ENCODE measurements at regions of chr6 and their contacts with region 1.

Region 1: GRCh38 chr6:2848851-2849250 is 7.2 kb upstream of the SERPINB1 start:
- DNase-seq: no peak
- ATAC-seq: peak; percentile 65
- H3K4me3 Mint-ChIP-seq: peak overlapping the region; percentile 33
- H3K27ac Mint-ChIP-seq: peak overlapping the region; percentile 83
- H3K4me1 Mint-ChIP-seq: peaks cover 59% of the 10 kb centered on the region
- H3K27me3 Mint-ChIP-seq: no peaks in the 10 kb centered on the region
- CTCF ChIP-seq: no peak

Region 2: GRCh38 chr6:2237001-2237400 is 611.9 kb before region 1 on chr6:
- CTCF ChIA-PET with region 1: no interaction called
- POLR2A ChIA-PET with region 1: no interaction called
- intact Hi-C with region 1: no loop called
- DNase-seq: no peak
- ATAC-seq: no peak
- H3K4me3 Mint-ChIP-seq: no peak overlapping the region
- H3K27ac Mint-ChIP-seq: no peak overlapping the region
- H3K4me1 Mint-ChIP-seq: peaks cover 15% of the 10 kb centered on the region
- H3K27me3 Mint-ChIP-seq: no peaks in the 10 kb centered on the region
- CTCF ChIP-seq: no peak

Region 3: GRCh38 chr6:2862712-2863181 is 13.9 kb after region 1 on chr6:
- CTCF ChIA-PET with region 1: interaction called, 37 read pairs
- POLR2A ChIA-PET with region 1: interaction called, 126 read pairs
- intact Hi-C with region 1: loop called (anchors 1 kb)
- DNase-seq: no peak
- ATAC-seq: peak; percentile 56
- H3K4me3 Mint-ChIP-seq: peak overlapping the region; percentile 56
- H3K27ac Mint-ChIP-seq: peak overlapping the region; percentile 92
- H3K4me1 Mint-ChIP-seq: peaks cover 91% of the 10 kb centered on the region
- H3K27me3 Mint-ChIP-seq: no peaks in the 10 kb centered on the region
- CTCF ChIP-seq: no peak

Region 4: DNA sequence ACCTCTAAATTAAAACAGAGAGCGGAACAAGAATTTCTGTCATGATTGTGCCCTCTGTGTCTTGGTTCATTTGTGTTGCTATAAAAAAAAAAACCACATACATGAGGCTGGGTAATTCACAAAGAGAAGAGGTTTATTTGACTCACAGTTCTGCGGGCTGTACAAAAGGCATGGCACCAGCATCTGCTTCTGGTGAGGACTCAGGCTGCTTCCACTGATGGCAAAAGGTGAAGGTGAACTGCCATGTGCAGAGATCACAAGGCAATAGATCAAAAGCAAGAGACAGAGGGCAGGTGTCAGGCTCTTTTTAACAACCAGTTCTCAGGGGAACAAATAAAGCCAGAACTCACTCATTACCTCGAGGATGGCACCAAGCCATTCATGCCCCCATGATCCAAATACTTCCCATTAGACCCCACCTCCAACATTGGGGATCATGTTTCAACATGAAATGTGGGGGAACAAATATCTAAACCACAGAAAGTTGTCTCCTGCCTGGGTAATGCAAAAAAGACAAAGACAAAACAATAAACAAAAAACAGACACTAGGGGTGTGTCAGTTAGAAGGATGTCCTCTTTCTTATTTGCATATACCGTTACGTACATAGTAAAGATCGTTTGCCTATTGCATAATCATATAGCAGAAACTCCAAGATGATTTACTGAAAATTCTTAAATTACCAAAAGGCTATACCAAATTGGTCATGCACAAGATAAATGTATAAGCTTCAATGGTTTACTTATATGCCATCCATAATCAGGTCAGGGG is 37.3 kb after region 1 on chr6:
- CTCF ChIA-PET with region 1: interaction called, 10 read pairs
- POLR2A ChIA-PET with region 1: interaction called, 52 read pairs
- intact Hi-C with region 1: loop called (anchors 1 kb)
- DNase-seq: no peak
- ATAC-seq: peak; percentile 41
- H3K4me3 Mint-ChIP-seq: peak overlapping the region; percentile 42
- H3K27ac Mint-ChIP-seq: peak overlapping the region; percentile 92
- H3K4me1 Mint-ChIP-seq: peaks cover 83% of the 10 kb centered on the region
- H3K27me3 Mint-ChIP-seq: no peaks in the 10 kb centered on the region
- CTCF ChIP-seq: no peak

Region 5: DNA sequence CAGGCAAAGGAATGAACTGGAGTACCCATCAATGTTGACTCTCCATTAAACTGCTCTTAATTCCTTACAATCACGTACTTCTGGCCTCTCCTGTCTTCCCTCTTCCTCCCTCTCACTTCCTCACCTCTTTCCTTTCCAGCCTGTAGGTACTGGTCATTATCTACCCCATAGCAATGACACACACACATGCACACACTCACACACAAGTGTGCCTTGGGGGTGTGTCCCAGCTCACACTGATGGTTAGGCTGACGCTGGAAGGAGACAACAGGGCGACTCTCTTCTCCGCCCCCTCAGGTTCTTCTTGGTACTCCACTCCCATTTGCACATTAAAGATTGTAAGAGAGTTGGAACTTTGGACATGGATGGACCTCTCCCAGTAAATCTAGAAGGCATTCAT is 68.2 kb after region 1 on chr6:
- CTCF ChIA-PET with region 1: interaction called, 100 read pairs
- POLR2A ChIA-PET with region 1: interaction called, 9 read pairs
- intact Hi-C with region 1: no loop called
- DNase-seq: no peak
- ATAC-seq: peak; percentile 68
- H3K4me3 Mint-ChIP-seq: no peak overlapping the region
- H3K27ac Mint-ChIP-seq: no peak overlapping the region
- H3K4me1 Mint-ChIP-seq: no peaks in the 10 kb centered on the region
- H3K27me3 Mint-ChIP-seq: no peaks in the 10 kb centered on the region
- CTCF ChIP-seq: no peak